Sciatic nerve (tissue), 2 donors: ENCODE measurements at regions of chr3 and their contacts with region 1.

Region 1: GRCh38 chr3:41893977-41894376 is 67.9 kb downstream of the ULK4 start:
- DNase-seq: no peak
- ATAC-seq: no peak

Region 2: DNA sequence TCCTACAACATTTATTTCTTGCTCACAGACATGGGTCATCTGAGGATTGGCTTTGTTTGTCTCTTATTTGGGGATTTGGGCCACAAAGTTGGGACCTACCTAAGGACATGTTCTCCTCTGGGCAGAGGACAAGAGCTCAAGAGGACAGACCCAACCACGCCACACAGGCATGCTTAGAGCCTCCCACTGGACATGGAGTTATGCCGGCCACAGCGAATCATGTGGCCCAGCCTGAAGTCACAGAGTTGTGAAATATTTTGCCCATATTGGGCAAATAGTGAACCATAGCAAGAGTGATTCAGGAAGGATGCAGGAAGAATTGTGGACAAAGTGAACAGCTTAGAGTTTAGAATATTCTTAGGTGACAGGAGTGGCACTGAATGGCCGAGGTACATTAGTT is 207.1 kb after region 1 on chr3:
- intact Hi-C with region 1: loop called (anchors 5 kb)
- DNase-seq: peak; percentile 76
- ATAC-seq: peak; percentile 92

Region 3: GRCh38 chr3:42118762-42119361 is 224.9 kb after region 1 on chr3:
- intact Hi-C with region 1: no loop called
- DNase-seq: no peak
- ATAC-seq: peak; percentile 44

Region 4: GRCh38 chr3:42190701-42191462 is 296.9 kb after region 1 on chr3:
- intact Hi-C with region 1: loop called (anchors 10 kb)
- DNase-seq: peak; percentile 82
- ATAC-seq: peak; percentile 75